ENCODE measurements at regions of chr14 and their contacts with region 1.

Region 1: GRCh38 chr14:103343905-103344797 is 10.1 kb downstream of the EIF5 start:
- DNase-seq: no peak
- H3K4me3 ChIP-seq: no peak overlapping the region
- H3K27ac ChIP-seq: no peak overlapping the region
- H3K4me1 ChIP-seq: no peaks in the 10 kb centered on the region
- H3K27me3 ChIP-seq: no peaks in the 10 kb centered on the region

Region 2: GRCh38 chr14:103333754-103334643 is 10.2 kb before region 1 on chr14 and contains the start of gene EIF5:
- CTCF ChIA-PET with region 1: interaction called, 7 read pairs
- POLR2A ChIA-PET with region 1: interaction called, 10 read pairs
- DNase-seq: peak; percentile 99
- H3K4me3 ChIP-seq: peak within 1 kb of the TSS; percentile 79 to 96 (median 88)
- H3K27ac ChIP-seq: peak within 1 kb of the TSS; percentile 98 to 99
- H3K4me1 ChIP-seq: peaks cover 14 to 49% (median 41%) of the 10 kb centered on the region in 4 experiments
- H3K27me3 ChIP-seq: no peaks in the 10 kb centered on the region